Activated CD8-positive, alpha-beta T cell treated with anti-CD3 and anti-CD28 coated beads, Interleukin-2, amount 10 ng/mL, durations not matched to agents 7 days and 5 days (primary cell): ENCODE measurements at regions of chr20 and their contacts with region 1.

Region 1: GRCh38 chr20:45450097-45450818 is 19.3 kb upstream of the WFDC2 start:
- DNase-seq: peak; percentile 42
- ATAC-seq: peak; percentile 50
- H3K4me3 Mint-ChIP-seq: no peak overlapping the region
- H3K27ac Mint-ChIP-seq: no peak overlapping the region
- H3K4me1 Mint-ChIP-seq: peaks cover 17% of the 10 kb centered on the region
- H3K27me3 Mint-ChIP-seq: peaks cover 9% of the 10 kb centered on the region

Region 2: DNA sequence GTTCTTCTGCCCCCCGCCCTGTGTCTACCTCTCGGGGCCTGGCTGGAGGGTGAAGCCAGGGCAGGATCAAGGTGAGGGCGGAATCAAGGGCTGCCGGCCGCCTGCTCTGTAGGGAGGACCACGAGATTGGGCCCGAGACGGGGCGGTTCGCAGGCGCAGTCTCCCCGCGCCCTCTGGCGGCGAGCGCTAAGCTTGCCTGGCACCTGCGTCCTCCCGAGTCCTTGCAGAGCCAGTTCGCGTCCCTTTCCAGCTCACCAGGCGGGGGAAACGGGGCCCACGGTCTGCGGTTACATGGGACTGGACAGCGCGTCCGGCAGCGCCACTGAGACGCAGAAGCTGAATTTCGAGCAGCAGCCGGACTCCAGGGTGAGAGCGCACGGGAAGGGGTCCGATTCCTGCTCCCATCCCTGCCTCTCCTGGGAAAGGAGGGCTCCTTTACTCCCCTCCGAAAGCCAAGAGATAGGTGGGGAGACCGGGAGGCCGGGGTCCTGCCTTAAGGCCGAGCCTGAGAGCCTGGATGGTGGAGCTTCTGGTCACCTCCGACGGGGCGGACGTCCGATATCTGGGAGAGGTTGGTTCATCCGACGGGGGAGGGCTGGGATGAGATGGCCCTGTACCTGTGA is 138.6 kb before region 1 on chr20:
- CTCF ChIA-PET with region 1: interaction called, 11 read pairs
- POLR2A ChIA-PET with region 1: interaction called, 3 read pairs
- DNase-seq: peak; percentile 70
- ATAC-seq: peak; percentile 82
- H3K4me3 Mint-ChIP-seq: no peak overlapping the region
- H3K27ac Mint-ChIP-seq: no peak overlapping the region
- H3K4me1 Mint-ChIP-seq: peaks cover 9% of the 10 kb centered on the region
- H3K27me3 Mint-ChIP-seq: peaks cover 38% of the 10 kb centered on the region

Region 3: GRCh38 chr20:45362804-45363610 is 87.3 kb before region 1 on chr20 and contains the start of gene SYS1:
- CTCF ChIA-PET with region 1: interaction called, 109 read pairs
- POLR2A ChIA-PET with region 1: interaction called, 3 read pairs
- DNase-seq: peak; percentile 99
- ATAC-seq: peak; percentile 91
- H3K4me3 Mint-ChIP-seq: peak within 1 kb of the TSS; percentile 97
- H3K27ac Mint-ChIP-seq: peak within 1 kb of the TSS; percentile 93
- H3K4me1 Mint-ChIP-seq: peaks cover 61% of the 10 kb centered on the region
- H3K27me3 Mint-ChIP-seq: no peaks in the 10 kb centered on the region
- total RNA-seq, gene SYS1: 28.0 to 30.8 TPM

Region 4: DNA sequence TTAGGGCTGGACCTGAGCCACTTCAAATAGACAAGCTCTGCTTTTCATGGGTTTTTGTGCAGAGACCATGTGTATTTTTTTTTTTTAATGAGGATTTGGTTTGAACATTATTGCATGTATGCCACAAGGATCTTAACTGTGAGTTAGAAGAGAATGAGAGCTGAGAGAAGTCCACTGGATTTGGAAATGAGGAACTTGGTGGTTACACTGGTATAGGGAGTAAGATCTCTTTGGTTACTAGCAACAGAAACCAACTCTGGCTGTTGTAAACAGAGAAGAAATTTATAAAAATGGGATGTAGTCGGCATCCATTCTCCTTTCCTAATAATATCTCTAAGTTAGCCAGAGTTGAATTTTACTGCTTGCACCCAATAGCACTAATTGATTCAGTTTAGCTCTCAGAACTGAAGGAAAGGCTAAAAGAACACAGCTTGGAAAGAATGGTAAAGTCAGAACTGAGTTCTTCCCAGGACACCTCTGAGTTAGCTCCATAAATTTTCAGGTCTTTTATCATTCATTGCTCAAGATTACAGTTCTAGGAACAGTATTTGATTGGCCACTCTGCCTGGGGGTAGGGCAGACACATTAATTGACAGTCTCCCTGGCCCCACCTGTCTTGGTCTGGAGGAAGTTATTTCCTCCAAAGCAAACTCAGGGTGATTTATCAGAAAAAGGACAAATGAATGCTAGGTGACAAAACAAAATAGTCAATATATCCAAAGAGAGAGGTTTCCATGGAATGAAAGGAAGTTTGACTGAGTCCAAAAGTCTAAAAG is 15.4 kb after region 1 on chr20:
- CTCF ChIA-PET with region 1: interaction called, 13 read pairs
- POLR2A ChIA-PET with region 1: no interaction called
- DNase-seq: no peak
- ATAC-seq: no peak
- H3K4me3 Mint-ChIP-seq: no peak overlapping the region
- H3K27ac Mint-ChIP-seq: no peak overlapping the region
- H3K4me1 Mint-ChIP-seq: no peaks in the 10 kb centered on the region
- H3K27me3 Mint-ChIP-seq: peaks cover 34% of the 10 kb centered on the region